K562 (cell line): ENCODE measurements at regions of chr10 and their contacts with region 1.

Region 1: DNA sequence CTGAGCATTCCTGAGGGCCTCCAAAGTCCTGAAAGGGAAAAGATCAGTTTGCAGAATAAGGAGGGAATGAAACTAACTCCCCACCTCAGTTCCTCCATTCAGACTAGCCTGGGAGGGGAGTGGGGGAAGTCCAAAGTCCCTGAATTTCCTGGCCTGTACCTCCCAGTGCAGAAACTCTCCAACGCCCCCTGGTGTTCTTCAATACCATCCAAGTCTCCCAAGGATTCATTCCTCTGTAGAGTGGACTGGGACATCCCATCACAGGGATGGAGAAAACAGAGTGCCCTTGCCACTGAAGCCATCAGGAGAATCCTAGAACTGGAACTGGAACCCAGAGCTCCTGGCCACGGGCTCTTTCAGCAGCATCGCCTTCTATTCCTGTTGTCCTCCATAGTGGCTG is 1.6 kb upstream of the COL13A1 start:
- DNase-seq: peak; percentile 48 to 69 (median 61)
- ATAC-seq: peak; percentile 87
- H3K4me3 ChIP-seq: no peak overlapping the region
- H3K27ac ChIP-seq: no peak overlapping the region
- H3K4me1 ChIP-seq: peaks cover 0 to 13% of the 10 kb centered on the region in 2 experiments; a peak in 1 of 5 replicates
- H3K27me3 ChIP-seq: peaks cover 17 to 59% of the 10 kb centered on the region in 2 experiments; a peak in 4 of 5 replicates
- CTCF ChIP-seq: peak; percentile 63 to 79 (median 75)
- EP300 ChIP-seq: no peak
- POLR2A ChIP-seq: no peak
- RAD21 ChIP-seq: peak; percentile 57 to 67

Region 2: DNA sequence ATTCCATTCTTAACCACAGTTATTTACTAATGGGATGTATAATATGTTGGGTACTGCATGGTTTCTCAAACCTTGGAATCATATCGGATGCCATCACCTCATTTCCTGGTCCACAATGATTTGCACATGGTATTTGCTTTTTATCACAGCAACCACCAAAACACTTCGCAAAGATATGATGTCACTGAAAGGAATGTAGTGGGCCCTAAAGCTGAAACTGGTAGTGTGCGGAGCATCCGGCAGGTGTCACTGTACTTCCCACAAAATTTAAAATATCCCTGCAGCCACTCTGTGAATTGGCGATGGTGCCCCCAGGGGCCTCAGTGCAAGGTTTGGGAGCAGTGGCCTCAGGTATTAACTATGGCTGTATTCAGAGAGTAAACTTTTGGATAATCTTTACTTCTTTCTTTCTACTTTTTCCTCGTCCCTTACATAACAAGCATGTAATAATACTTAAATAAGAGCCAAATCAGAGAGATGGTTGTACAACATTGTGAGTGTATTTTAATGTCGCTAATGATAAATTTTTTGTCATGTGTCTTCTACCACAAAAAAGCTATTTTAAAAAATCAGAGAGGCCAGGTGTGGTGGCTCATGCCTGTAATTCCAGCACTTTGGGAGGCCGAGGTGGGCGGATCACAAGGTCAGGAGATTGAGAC is 103.9 kb before region 1 on chr10:
- CTCF ChIA-PET with region 1: no interaction called
- POLR2A ChIA-PET with region 1: no interaction called
- in situ Hi-C with region 1: no loop called
- intact Hi-C with region 1: loop called (anchors 1 kb)
- DNase-seq: peak; percentile 65 to 86 (median 80)
- ATAC-seq: peak; percentile 98
- H3K4me3 ChIP-seq: no peak overlapping the region
- H3K27ac ChIP-seq: no peak overlapping the region
- H3K4me1 ChIP-seq: no peaks in the 10 kb centered on the region
- H3K27me3 ChIP-seq: peaks cover 0 to 7% of the 10 kb centered on the region in 2 experiments; a peak in 2 of 5 replicates
- CTCF ChIP-seq: peak; percentile 84 to 88 (median 88)
- EP300 ChIP-seq: no peak
- POLR2A ChIP-seq: no peak
- RAD21 ChIP-seq: peak; percentile 60 to 67

Region 3: GRCh38 chr10:71647526-71648253 is 1847.6 kb after region 1 on chr10:
- CTCF ChIA-PET with region 1: no interaction called
- POLR2A ChIA-PET with region 1: no interaction called
- in situ Hi-C with region 1: no loop called
- intact Hi-C with region 1: no loop called
- DNase-seq: peak; percentile 72 to 88 (median 80)
- ATAC-seq: peak; percentile 79
- H3K4me3 ChIP-seq: no peak overlapping the region
- H3K27ac ChIP-seq: peak overlapping the region; percentile 78
- H3K4me1 ChIP-seq: peaks cover 39 to 62% of the 10 kb centered on the region in 2 experiments
- H3K27me3 ChIP-seq: no peaks in the 10 kb centered on the region
- CTCF ChIP-seq: peak; percentile 80 to 95 (median 90)
- EP300 ChIP-seq: peak; percentile 6; the same call in 1 of the 2 replicates
- POLR2A ChIP-seq: no peak
- RAD21 ChIP-seq: peak; percentile 43 to 86